Uterus (tissue), 4 donors: ENCODE measurements at regions of chr16 and their contacts with region 1.

Region 1: GRCh38 chr16:57757326-57757786 is 21.8 kb downstream of the KATNB1 start:
- DNase-seq: peak; percentile 85 to 90
- H3K4me3 ChIP-seq: no peak overlapping the region
- H3K27ac ChIP-seq: no peak overlapping the region
- H3K4me1 ChIP-seq: no peaks in the 10 kb centered on the region
- H3K27me3 ChIP-seq: no peaks in the 10 kb centered on the region
- CTCF ChIP-seq: peak; percentile 94 to 99 (median 96)
- POLR2A ChIP-seq: no peak

Region 2: GRCh38 chr16:57863434-57864160 is 106.2 kb after region 1 on chr16:
- intact Hi-C with region 1: loop called (anchors 10 kb)
- DNase-seq: peak; percentile 52 to 69
- H3K4me3 ChIP-seq: no peak overlapping the region
- H3K27ac ChIP-seq: no peak overlapping the region
- H3K4me1 ChIP-seq: no peaks in the 10 kb centered on the region
- H3K27me3 ChIP-seq: no peaks in the 10 kb centered on the region
- CTCF ChIP-seq: peak; percentile 54 to 68 (median 62)
- POLR2A ChIP-seq: no peak